ENCODE measurements at regions of chr11 and their contacts with region 1.

Region 1: DNA sequence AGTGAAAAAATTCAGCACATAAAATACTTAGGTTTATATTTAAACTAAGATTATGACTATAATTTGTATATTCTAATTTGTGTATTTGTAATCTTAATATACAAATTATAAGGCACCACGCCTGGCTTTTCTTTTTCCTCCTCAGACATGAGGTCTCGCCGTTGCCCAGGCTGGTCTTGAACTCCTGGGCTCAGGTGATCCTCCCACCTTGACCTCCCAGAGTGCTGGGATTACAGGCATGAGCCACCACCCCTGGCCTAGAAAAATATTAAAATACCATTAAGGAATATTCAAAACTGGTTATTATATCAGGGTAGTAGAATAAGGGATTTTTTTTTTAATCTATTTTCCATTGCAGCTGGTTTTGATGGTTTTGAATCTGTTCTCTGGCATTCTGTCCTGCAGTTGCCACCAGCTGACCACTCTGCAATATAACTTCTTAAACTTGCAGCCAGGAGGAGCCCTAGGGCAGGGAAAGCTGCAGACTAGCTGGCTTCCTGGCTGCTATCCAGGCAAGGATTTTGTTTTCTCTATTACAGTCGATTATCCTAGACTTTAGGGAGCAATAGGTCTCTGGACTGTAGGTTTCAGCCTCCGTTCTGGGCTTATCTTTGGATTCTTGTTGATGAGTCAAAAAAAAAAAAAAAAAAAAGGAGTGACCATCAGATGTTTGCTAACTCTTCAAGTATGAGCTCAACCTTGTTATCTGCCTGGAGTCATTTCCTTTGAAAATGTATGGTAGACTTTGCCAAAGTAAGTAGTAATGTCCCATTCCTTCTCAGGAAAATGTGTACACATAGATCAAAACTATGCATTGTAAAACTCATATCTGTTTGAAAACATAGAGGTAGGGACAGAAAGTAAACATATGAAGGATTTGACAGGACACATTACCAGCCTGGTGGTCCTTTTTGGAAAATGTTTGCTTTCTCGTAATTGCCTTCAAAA is 13.2 kb downstream of the POLA2 start:
- DNase-seq: peak; percentile 79
- H3K4me3 ChIP-seq: no peak overlapping the region
- H3K27ac ChIP-seq: peak overlapping the region; percentile 59 to 75 (median 64)
- H3K4me1 ChIP-seq: peaks cover 0 to 26% (median 15%) of the 10 kb centered on the region in 4 donors
- H3K27me3 ChIP-seq: no peaks in the 10 kb centered on the region
- CTCF ChIP-seq: peak; percentile 68 to 93 (median 78)
- EP300 ChIP-seq: no peak
- POLR2A ChIP-seq: no peak

Region 2: GRCh38 chr11:65314501-65315203 is 39.6 kb after region 1 on chr11 and contains the start of gene CDC42EP2:
- in situ Hi-C with region 1: loop called in 1 of 4 experiments (anchors 5 kb)
- intact Hi-C with region 1: loop called (anchors 2 kb)
- DNase-seq: peak; percentile 92
- H3K4me3 ChIP-seq: peak within 1 kb of the TSS; percentile 51 to 67 (median 60)
- H3K27ac ChIP-seq: peak within 1 kb of the TSS; percentile 90 to 91 (median 90)
- H3K4me1 ChIP-seq: peaks cover 20 to 62% (median 43%) of the 10 kb centered on the region in 4 donors
- H3K27me3 ChIP-seq: no peaks in the 10 kb centered on the region
- CTCF ChIP-seq: no peak
- EP300 ChIP-seq: no peak
- POLR2A ChIP-seq: peak; percentile 79
- total RNA-seq, gene CDC42EP2: 9.1 to 22.7 (median 14.5) TPM

Region 3: DNA sequence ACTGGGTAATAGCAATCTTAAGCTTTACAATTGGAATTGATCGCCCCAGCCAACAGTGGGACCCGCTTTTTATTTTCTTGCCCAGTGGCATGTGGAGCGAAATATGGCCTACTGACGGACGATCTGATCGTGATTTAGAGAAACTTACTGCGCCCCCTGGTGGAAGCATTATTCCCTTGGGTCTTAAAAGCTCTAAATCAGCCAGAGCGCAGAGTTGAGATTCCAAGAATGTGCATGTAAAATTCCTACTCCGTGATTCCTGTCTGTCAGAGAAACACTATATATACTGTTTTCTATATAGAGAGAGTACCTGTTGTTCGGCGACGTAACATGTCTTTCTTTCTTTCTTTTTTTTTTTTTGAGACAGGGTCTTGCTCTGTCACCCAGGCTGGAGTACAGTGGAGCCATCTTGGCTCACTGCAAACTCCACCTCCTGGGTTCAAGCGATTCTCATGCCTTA is 55.0 kb after region 1 on chr11:
- in situ Hi-C with region 1: loop called in 3 of 4 experiments (anchors 5 to 10 kb)
- intact Hi-C with region 1: no loop called
- DNase-seq: peak; percentile 93
- H3K4me3 ChIP-seq: no peak overlapping the region
- H3K27ac ChIP-seq: peak overlapping the region in 1 of 4 donors; percentile 38
- H3K4me1 ChIP-seq: peaks cover 6 to 25% (median 16%) of the 10 kb centered on the region in 4 donors
- H3K27me3 ChIP-seq: no peaks in the 10 kb centered on the region
- CTCF ChIP-seq: peak; percentile 78 to 94 (median 85)
- EP300 ChIP-seq: no peak
- POLR2A ChIP-seq: no peak

Measured in transverse colon (tissue), 4 donors.